ENCODE measurements at regions of chr16 and their contacts with region 1.

Region 1: GRCh38 chr16:85491058-85491771 is 121.9 kb upstream of the GSE1 start:
- DNase-seq: no peak
- H3K4me3 ChIP-seq: no peak overlapping the region
- H3K27me3 ChIP-seq: no peaks in the 10 kb centered on the region
- CTCF ChIP-seq: peak; percentile 48; the same call in 1 of the 2 replicates

Region 2: DNA sequence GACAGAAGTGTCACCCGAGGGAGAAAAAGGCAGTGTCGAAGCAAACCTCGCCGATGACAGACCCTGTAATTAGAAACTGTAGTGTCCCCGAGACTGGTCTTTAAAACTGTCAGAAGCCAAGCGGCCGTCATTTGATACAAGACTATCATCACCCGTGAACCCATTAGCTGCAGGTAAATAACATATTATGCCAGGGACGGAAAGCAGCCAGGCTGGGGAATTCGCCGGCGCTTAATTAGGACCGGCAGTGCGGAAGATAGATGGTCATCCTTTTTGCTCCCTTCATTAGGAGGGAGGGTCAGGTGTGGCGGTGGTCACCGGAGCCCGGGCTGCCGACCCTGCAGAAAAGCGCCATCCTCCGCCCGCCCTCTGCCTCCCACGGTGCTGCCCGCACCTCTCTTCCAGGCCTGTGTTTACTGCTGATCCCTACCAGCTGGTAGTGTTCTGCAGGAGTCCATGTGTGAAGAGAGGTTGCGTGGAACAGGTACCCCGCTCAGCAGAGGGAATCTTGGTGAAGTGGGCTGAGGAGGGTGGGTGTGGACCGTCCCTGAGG is 12.5 kb after region 1 on chr16:
- CTCF ChIA-PET with region 1: interaction called, 10 read pairs
- POLR2A ChIA-PET with region 1: no interaction called
- DNase-seq: no peak
- H3K4me3 ChIP-seq: no peak overlapping the region
- H3K27me3 ChIP-seq: no peaks in the 10 kb centered on the region
- CTCF ChIP-seq: no peak

Measured in BJ (cell line).